T-cell (primary cell): ENCODE measurements at regions of chr12 and their contacts with region 1.

Region 1: GRCh38 chr12:109995686-109996482 is at the start of gene GIT2:
- DNase-seq: peak; percentile 85 to 97 (median 93)
- ATAC-seq: peak; percentile 81 to 84 (median 82)
- H3K4me3 ChIP-seq: peak within 1 kb of the TSS; percentile 70 to 87
- H3K4me3 Mint-ChIP-seq: peak within 1 kb of the TSS; percentile 97 to 99 (median 98)
- H3K27ac ChIP-seq: peak within 1 kb of the TSS; percentile 65
- H3K27ac Mint-ChIP-seq: peak within 1 kb of the TSS; percentile 92 to 97
- H3K4me1 ChIP-seq: peaks cover 26 to 43% of the 10 kb centered on the region in 2 experiments
- H3K4me1 Mint-ChIP-seq: peaks cover 61 to 71% (median 67%) of the 10 kb centered on the region in 3 donors
- H3K27me3 ChIP-seq: no peaks in the 10 kb centered on the region
- H3K27me3 Mint-ChIP-seq: no peaks in the 10 kb centered on the region
- total RNA-seq, gene GIT2: 96.7 to 132 (median 108) TPM

Region 2: DNA sequence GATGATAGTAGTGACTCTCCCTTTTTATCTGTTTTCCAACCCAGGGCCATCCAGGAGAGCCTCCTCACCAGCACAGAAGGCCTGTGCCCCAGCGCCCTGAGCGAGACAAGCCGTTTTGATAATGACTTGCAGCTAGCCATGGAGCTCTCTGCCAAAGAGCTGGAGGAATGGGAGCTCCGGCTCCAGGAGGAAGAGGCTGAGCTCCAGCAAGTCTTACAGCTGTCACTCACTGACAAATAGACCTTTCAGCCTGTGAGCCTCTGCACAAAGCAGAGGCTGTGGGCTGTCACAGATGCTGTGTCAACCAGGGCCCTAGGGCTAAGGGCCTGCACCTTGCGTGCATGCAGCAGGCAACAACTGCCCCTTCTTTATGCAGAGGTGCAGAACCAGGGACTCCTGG is 41.4 kb after region 1 on chr12:
- CTCF ChIA-PET with region 1: no interaction called
- POLR2A ChIA-PET with region 1: no interaction called
- DNase-seq: no peak
- ATAC-seq: no peak
- H3K4me3 ChIP-seq: no peak overlapping the region
- H3K4me3 Mint-ChIP-seq: no peak overlapping the region
- H3K27ac ChIP-seq: no peak overlapping the region
- H3K27ac Mint-ChIP-seq: no peak overlapping the region
- H3K4me1 ChIP-seq: peaks cover 10 to 15% of the 10 kb centered on the region in 2 experiments
- H3K4me1 Mint-ChIP-seq: peaks cover 20 to 29% (median 27%) of the 10 kb centered on the region in 3 donors
- H3K27me3 ChIP-seq: no peaks in the 10 kb centered on the region
- H3K27me3 Mint-ChIP-seq: no peaks in the 10 kb centered on the region

Region 3: GRCh38 chr12:110048242-110049027 is 52.6 kb after region 1 on chr12 and contains the start of gene C12orf76:
- CTCF ChIA-PET with region 1: no interaction called
- POLR2A ChIA-PET with region 1: no interaction called
- DNase-seq: peak; percentile 80 to 97 (median 88)
- ATAC-seq: peak; percentile 100
- H3K4me3 ChIP-seq: peak within 1 kb of the TSS; percentile 66 to 71
- H3K4me3 Mint-ChIP-seq: peak within 1 kb of the TSS; percentile 84 to 90 (median 87)
- H3K27ac ChIP-seq: peak within 1 kb of the TSS; percentile 75
- H3K27ac Mint-ChIP-seq: peak within 1 kb of the TSS; percentile 95 to 96
- H3K4me1 ChIP-seq: peaks cover 18 to 22% of the 10 kb centered on the region in 2 experiments
- H3K4me1 Mint-ChIP-seq: peaks cover 26 to 45% (median 37%) of the 10 kb centered on the region in 3 donors
- H3K27me3 ChIP-seq: no peaks in the 10 kb centered on the region
- H3K27me3 Mint-ChIP-seq: no peaks in the 10 kb centered on the region
- total RNA-seq, gene C12orf76: 13.6 to 31.0 (median 28.5) TPM

Region 4: GRCh38 chr12:110073049-110073831 is 77.4 kb after region 1 on chr12:
- CTCF ChIA-PET with region 1: no interaction called
- POLR2A ChIA-PET with region 1: interaction called in 1 of 2 experiments, 10 read pairs
- DNase-seq: peak in 17 of 35 experiments; percentile 2 to 29 (median 11)
- ATAC-seq: peak; percentile 70 to 80 (median 74)
- H3K4me3 ChIP-seq: peak overlapping the region; percentile 42 to 64
- H3K4me3 Mint-ChIP-seq: peak overlapping the region; percentile 81 to 93 (median 87)
- H3K27ac ChIP-seq: no peak overlapping the region
- H3K27ac Mint-ChIP-seq: peak overlapping the region; percentile 71 to 92
- H3K4me1 ChIP-seq: peaks cover 5 to 20% of the 10 kb centered on the region in 2 experiments
- H3K4me1 Mint-ChIP-seq: peaks cover 25 to 37% (median 31%) of the 10 kb centered on the region in 3 donors
- H3K27me3 ChIP-seq: no peaks in the 10 kb centered on the region
- H3K27me3 Mint-ChIP-seq: no peaks in the 10 kb centered on the region

Region 5: GRCh38 chr12:110431957-110432587 is 436.2 kb after region 1 on chr12:
- CTCF ChIA-PET with region 1: no interaction called
- POLR2A ChIA-PET with region 1: no interaction called
- DNase-seq: no peak
- ATAC-seq: peak in 1 of 4 experiments; percentile 26
- H3K4me3 ChIP-seq: peak overlapping the region in 1 of 2 donors; percentile 55
- H3K4me3 Mint-ChIP-seq: peak overlapping the region in 1 of 3 donors; percentile 100
- H3K27ac ChIP-seq: no peak overlapping the region
- H3K27ac Mint-ChIP-seq: no peak overlapping the region
- H3K4me1 ChIP-seq: peaks cover 0 to 4% of the 10 kb centered on the region in 2 experiments
- H3K4me1 Mint-ChIP-seq: peaks cover 0 to 3% (median 0%) of the 10 kb centered on the region in 3 donors
- H3K27me3 ChIP-seq: peaks cover 0 to 7% of the 10 kb centered on the region in 2 experiments
- H3K27me3 Mint-ChIP-seq: no peaks in the 10 kb centered on the region